AG04449 (cell line): ENCODE measurements at regions of chr2 and their contacts with region 1.

Region 1: GRCh38 chr2:240851078-240851991 is 17.3 kb upstream of the AGXT start:
- DNase-seq: peak; percentile 10
- H3K4me3 ChIP-seq: no peak overlapping the region
- CTCF ChIP-seq: peak; percentile 89

Region 2: DNA sequence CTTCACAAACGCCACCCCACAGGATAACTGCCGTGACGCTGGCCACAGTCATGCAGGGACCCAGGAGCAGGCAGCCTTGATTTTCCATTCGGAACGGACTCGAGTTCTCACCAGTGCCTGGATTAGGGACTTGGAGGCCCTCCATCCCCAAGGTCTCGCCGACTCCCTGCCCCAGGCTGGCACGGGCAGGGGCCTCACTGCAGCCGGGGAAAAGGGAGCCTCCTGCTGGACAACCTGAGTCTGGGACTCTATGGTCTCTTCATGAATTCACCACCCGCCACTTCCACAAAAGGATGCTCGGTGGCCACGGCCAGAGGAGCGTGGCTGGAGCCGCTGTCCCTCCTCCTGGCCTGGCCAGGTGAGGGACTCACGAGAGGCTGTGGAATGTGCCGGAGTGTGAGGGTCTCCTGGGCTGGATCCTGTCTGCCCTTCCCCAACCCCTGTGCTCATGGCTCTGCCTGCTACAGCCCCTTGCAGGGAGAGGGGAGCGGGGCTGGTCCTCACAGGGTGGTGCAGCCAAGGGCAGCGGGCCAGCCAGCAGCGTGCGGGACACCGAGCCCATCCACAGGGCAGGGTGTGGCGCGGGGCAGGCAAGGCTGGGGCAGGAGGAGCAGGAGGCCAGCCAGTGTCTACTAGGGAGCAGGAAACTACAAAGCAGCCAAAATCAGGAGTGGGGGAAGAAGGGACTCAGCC is 117.4 kb before region 1 on chr2:
- CTCF ChIA-PET with region 1: no interaction called
- POLR2A ChIA-PET with region 1: no interaction called
- DNase-seq: no peak
- H3K4me3 ChIP-seq: no peak overlapping the region
- CTCF ChIP-seq: no peak

Region 3: GRCh38 chr2:240840435-240841080 is 10.8 kb before region 1 on chr2:
- CTCF ChIA-PET with region 1: interaction called, 45 read pairs
- POLR2A ChIA-PET with region 1: interaction called, 3 read pairs
- DNase-seq: no peak
- H3K4me3 ChIP-seq: no peak overlapping the region
- CTCF ChIP-seq: peak; percentile 69

Region 4: DNA sequence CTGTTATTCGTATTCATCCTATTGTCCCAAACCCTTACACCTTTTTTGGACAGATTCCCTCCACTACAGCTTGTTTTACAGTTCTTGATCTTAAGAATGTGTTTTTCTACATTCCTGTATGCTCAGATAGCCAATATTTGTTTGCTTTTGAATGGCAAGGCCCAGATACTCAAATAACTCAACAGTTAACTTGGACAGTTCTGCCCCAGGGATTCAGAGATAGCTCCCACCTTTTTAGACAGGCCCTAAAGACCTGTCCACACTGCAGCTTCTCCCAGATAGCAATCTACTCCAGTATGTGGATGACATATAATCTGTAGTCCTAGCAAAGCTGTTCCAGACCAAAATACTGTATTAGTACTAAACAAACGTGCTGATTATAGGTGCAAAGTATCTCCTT is 10.2 kb after region 1 on chr2:
- CTCF ChIA-PET with region 1: interaction called, 41 read pairs
- POLR2A ChIA-PET with region 1: no interaction called
- DNase-seq: no peak
- H3K4me3 ChIP-seq: no peak overlapping the region
- CTCF ChIP-seq: no peak

Region 5: GRCh38 chr2:240881913-240882312 is 30.6 kb after region 1 on chr2:
- CTCF ChIA-PET with region 1: interaction called, 10 read pairs
- POLR2A ChIA-PET with region 1: no interaction called
- DNase-seq: no peak
- H3K4me3 ChIP-seq: no peak overlapping the region
- CTCF ChIP-seq: no peak

Region 6: GRCh38 chr2:241224018-241224850 is 372.9 kb after region 1 on chr2:
- CTCF ChIA-PET with region 1: interaction called, 11 read pairs
- POLR2A ChIA-PET with region 1: interaction called, 4 read pairs
- DNase-seq: no peak
- H3K4me3 ChIP-seq: no peak overlapping the region
- CTCF ChIP-seq: no peak

Region 7: GRCh38 chr2:241659150-241659739 is 807.9 kb after region 1 on chr2:
- CTCF ChIA-PET with region 1: interaction called, 17 read pairs
- POLR2A ChIA-PET with region 1: no interaction called
- DNase-seq: no peak
- H3K4me3 ChIP-seq: no peak overlapping the region
- CTCF ChIP-seq: peak; percentile 74